ENCODE measurements at regions of chr1 and their contacts with region 1.

Region 1: DNA sequence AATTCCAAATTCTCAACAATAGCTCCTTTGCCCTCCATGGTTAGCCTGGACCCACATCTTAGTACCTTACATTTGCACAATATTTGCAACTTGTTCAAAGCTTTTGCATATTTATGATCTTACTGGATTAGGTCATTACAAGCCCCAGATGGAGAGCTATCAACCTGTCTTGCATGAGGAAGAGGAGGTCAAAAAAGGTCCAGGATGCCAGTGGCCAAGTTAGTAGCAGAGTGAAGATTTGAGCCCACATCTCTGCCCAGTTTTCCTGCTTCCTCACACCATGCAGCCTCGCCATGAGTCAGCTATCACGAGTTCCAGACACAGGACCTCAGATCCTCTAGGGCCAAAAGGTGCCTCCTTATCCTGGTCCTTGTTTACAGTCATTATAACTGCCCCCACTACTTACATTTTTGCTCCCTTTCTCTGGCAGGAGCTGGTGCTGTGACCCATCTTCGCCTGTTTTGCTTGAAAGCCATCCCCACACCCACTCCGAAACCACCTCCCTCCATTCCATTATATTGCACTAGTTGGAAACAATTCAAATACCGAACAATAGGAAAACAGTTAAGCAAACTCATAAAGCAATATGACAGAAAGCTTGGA is 5.0 kb upstream of the AHCYL1 start:
- DNase-seq: no peak
- ATAC-seq: no peak
- H3K4me3 ChIP-seq: no peak overlapping the region
- H3K27ac ChIP-seq: peak overlapping the region in 2 of 10 donors; percentile 16 to 58
- H3K4me1 ChIP-seq: peaks cover 3 to 59% (median 35%) of the 10 kb centered on the region in 9 donors
- H3K27me3 ChIP-seq: no peaks in the 10 kb centered on the region
- CTCF ChIP-seq: no peak

Region 2: DNA sequence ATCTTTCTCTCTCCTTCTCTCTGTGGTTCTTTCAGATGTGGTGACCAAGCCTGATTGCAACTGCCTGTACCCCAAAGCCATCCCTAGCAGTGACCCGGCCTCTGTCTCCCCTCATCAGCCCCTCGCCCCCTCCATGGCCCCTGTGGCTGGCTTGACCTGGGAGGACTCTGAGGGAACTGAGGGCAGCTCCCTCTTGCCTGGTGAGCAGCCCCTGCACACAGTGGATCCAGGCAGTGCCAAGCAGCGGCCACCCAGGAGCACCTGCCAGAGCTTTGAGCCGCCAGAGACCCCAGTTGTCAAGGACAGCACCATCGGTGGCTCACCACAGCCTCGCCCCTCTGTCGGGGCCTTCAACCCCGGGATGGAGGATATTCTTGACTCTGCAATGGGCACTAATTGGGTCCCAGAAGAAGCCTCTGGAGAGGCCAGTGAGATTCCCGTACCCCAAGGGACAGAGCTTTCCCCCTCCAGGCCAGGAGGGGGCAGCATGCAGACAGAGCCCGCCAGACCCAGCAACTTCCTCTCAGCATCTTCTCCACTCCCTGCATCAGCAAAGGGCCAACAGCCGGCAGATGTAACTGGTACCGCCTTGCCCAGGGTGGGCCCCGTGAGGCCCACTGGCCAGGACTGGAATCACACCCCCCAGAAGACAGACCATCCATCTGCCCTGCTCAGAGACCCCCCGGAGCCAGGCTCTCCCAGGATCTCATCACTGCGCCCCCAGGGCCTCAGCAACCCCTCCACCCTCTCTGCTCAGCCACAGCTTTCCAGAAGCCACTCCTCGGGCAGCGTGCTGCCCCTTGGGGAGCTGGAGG is 56.3 kb before region 1 on chr1:
- intact Hi-C with region 1: loop called in 4 of 10 experiments (anchors 5 to 10 kb)
- DNase-seq: no peak
- ATAC-seq: no peak
- H3K4me3 ChIP-seq: no peak overlapping the region
- H3K27ac ChIP-seq: peak overlapping the region in 2 of 10 donors; percentile 16 to 48
- H3K4me1 ChIP-seq: peaks cover 9 to 49% (median 19%) of the 10 kb centered on the region in 9 donors
- H3K27me3 ChIP-seq: no peaks in the 10 kb centered on the region
- CTCF ChIP-seq: peak; percentile 20 to 58 (median 46)

Region 3: GRCh38 chr1:110034451-110035235 is 55.1 kb after region 1 on chr1 and contains the start of gene STRIP1:
- intact Hi-C with region 1: no loop called
- DNase-seq: peak; percentile 91 to 95
- ATAC-seq: peak; percentile 96 to 98 (median 97)
- H3K4me3 ChIP-seq: peak within 1 kb of the TSS; percentile 88 to 100 (median 96)
- H3K27ac ChIP-seq: peak within 1 kb of the TSS; percentile 83 to 98 (median 94)
- H3K4me1 ChIP-seq: peaks cover 0 to 40% (median 21%) of the 10 kb centered on the region in 9 donors
- H3K27me3 ChIP-seq: no peaks in the 10 kb centered on the region
- CTCF ChIP-seq: no peak
- total RNA-seq, gene STRIP1: 13.9 to 23.2 (median 18.9) TPM